AG04449 (cell line): ENCODE measurements at regions of chrX and their contacts with region 1.

Region 1: GRCh38 chrX:110847334-110847733 is 51.7 kb upstream of the CHRDL1 start:
- DNase-seq: no peak
- H3K4me3 ChIP-seq: no peak overlapping the region
- CTCF ChIP-seq: peak; percentile 29

Region 2: DNA sequence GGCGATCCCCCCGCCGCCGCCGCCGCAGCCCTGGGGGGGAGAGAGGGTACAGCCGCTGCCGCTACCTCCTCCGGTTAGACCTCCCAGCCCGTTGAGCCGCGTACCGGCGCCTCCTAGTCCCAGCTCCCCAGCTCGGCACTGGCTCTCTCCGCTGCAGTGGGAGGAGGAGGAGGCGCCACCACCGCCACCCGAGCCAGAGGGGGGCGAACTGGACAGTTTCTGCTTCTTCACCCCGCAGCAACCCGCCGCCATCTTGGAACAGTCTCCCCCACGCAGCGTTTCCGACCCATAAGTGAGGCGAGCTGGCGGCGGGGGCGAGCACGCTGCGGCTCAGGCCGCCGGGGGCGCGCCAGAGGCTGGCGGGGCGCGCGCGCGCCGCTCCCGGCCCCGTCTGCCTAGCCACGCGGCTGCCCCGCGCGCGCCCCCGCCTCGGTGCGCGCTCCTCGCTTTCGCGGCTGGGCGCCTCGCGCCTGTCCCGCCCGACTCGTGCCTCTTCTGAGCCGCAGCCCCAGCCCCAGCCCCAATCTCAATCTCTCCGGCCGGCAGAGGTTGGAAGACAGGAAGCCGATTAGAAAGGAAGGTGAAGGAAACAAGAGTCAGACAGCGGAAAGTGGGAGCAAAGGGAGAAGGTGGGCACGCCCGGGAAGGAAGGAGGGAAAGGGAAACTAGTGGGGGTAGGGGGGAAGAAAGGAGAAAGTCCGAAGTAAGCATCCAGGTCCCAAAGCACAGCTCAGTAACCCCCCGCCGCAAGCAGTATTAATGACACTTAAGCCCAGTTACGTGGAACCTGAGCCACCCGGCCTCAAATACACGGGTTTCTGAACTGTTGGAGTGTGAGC is 529.3 kb before region 1 on chrX and contains the start of gene AMMECR1:
- CTCF ChIA-PET with region 1: no interaction called
- POLR2A ChIA-PET with region 1: no interaction called
- DNase-seq: no peak
- H3K4me3 ChIP-seq: peak within 1 kb of the TSS; percentile 73
- CTCF ChIP-seq: no peak

Region 3: DNA sequence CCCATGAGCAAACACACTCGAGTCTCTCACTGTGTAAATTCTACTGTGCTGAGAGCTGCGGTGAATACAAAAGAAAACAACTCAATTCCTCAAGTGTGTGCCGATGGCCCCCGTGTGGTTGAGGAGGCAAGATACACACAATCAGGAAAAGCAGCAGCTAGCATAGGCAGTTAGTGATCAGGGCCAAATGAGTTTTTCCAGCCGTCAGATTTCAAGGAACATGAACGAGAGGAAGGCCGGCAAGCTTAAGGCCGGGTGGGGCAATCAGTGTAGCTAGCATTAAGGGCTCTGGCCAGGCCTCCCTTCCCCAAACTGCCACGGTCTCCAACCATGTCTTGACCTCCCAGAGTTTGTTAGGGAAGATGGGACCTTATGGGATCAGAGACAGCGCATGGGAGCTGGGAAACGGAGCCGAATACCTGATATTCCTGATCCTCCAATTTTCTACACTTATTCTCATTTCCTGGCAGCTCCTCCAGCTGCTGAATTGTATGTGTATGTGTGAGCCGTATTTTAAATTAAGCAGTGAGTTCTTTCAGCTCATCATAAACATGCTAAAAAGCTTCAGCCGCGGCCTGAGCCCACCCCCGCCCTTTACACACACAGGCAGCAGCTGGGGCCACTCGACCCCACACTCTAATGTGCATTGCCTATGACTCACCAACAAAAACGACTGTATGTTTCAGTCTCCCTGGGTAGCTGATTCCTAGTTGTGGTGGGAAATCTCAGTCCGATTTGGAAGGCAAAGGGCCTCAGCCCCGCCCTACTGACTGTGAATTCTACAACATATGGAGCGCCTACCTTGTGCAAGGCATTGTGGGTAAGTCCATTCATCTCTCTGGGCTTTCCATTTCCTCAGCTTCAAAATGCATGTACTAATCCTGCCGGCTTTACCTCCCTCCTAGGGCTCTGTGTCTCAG is 428.8 kb before region 1 on chrX:
- CTCF ChIA-PET with region 1: interaction called, 12 read pairs
- POLR2A ChIA-PET with region 1: no interaction called
- DNase-seq: no peak
- H3K4me3 ChIP-seq: peak overlapping the region; percentile 30
- CTCF ChIP-seq: peak; percentile 64

Region 4: GRCh38 chrX:110442640-110443039 is 404.7 kb before region 1 on chrX:
- CTCF ChIA-PET with region 1: interaction called, 111 read pairs
- POLR2A ChIA-PET with region 1: no interaction called
- DNase-seq: no peak
- H3K4me3 ChIP-seq: no peak overlapping the region
- CTCF ChIP-seq: peak; percentile 35

Region 5: GRCh38 chrX:110450050-110450449 is 397.3 kb before region 1 on chrX:
- CTCF ChIA-PET with region 1: interaction called, 111 read pairs
- POLR2A ChIA-PET with region 1: no interaction called
- DNase-seq: peak; percentile 12
- H3K4me3 ChIP-seq: no peak overlapping the region
- CTCF ChIP-seq: peak; percentile 54

Region 6: DNA sequence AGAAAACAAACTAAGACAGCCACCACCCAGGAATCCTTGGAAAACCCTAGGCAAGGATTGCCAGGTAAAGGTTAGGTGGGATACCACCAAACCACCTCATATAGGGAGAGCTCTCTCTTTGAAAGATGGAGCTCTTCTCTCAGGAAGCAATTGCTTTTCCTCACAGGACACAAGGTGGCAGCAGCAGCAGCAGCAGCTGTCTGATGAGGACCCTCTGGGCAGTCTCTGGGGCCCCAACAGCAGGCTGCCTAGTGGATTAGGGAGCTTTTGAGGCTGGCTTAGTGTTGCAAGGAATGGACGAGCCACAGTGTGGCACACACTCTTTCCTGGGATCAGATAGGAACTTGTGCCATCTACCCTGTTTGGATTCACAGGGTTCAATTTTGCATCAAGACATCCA is 10.4 kb before region 1 on chrX:
- CTCF ChIA-PET with region 1: interaction called, 22 read pairs
- POLR2A ChIA-PET with region 1: no interaction called
- DNase-seq: no peak
- H3K4me3 ChIP-seq: no peak overlapping the region
- CTCF ChIP-seq: no peak